ENCODE measurements at regions of chr18 and their contacts with region 1.

Region 1: DNA sequence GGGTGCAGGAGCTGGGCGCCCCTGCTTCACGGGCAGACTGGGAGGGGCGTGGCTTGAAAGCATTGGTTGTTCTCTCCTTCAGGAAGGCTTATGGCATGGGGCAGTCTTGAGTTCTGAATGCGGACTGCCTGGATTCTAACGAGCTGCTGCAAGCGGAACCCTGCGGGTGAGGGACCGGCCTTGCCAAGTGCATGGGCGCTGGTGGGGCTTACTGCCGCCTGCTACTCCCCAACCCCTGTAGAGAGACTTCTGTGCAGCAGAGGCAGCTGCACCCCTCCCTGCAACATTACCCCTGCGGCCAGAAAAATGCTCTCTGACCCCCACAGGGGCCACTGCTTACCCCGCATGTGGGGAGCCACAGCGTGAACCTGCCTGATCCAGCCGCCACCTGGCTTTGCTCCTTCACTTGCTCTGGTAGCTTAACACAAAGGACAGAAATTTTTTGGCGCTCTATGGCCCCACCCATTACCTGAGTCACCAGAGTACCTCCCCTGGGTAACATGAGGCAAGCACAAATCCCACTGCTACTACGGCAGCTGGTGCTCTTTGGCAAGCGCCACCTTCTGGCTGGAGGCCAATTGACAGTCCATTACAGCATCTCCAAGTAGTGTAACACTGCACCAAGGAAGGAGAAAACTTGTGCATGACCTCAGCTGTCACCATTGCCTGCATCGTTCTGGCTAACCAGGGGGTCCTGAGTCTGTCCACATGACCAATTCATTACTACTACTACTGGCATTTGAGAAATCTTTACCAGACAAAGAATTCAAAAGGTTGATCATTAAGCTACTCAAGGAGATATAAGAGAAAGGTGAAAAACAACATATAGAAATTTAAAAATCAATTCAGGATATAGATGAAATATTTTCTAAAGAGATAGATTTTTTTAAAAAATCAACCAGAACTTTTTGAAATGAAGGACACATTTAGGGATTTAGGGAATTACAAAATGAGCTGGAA is 35.4 kb downstream of the MYL12B start:
- DNase-seq: peak; percentile 88 to 96 (median 92)
- ATAC-seq: peak; percentile 96
- H3K4me3 ChIP-seq: peak overlapping the region; percentile 65
- H3K4me3 Mint-ChIP-seq: peak overlapping the region; percentile 91
- H3K27ac ChIP-seq: no peak overlapping the region
- H3K27ac Mint-ChIP-seq: peak overlapping the region; percentile 79
- H3K4me1 ChIP-seq: peaks cover 11% of the 10 kb centered on the region
- H3K4me1 Mint-ChIP-seq: peaks cover 11% of the 10 kb centered on the region
- H3K27me3 ChIP-seq: peaks cover 0 to 15% of the 10 kb centered on the region in 2 experiments
- H3K27me3 Mint-ChIP-seq: peaks cover 35% of the 10 kb centered on the region
- CTCF ChIP-seq: peak; percentile 80

Region 2: DNA sequence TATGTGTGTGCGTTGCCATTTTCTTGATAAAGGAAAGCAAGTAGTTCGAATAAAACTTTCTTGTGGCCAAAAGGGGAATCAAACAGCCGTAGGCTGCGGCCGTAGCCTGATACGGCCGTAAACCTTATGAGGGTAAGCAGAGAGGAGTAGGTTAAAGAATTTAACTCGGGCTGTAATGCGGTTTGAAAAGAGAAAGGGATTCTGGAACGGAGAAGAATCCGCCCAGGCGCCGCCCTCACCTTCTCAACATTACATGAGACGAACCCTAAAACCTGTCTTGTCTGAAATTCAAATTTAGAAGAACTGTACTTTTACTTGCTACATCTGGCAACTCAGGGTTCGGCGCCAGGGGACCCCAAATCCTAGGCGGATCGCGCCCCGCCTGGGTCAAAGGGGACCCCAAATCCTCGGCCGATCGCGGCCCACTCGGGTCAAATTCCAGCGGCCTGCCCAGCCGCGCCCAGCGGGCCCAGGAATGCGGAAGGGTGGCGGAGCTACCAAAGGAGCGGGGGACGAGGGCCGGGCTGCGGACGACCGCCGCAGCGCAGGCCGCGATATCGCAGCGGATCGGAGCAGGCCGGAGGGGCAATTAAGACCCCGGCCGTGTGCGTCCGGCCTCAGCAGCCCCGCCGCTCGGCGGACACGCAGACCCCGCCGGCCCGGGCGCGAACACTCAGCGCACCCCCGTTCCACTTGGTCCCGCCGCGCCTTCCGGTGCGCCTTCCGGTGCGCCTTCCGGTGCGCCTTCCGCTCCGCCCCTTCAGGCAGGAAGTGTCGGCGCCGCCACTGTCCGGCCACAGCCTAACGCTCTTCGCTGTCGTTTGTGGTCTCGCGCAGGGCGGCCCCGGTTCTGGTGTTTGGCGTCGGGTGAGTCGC is 35.7 kb before region 1 on chr18 and contains the start of gene MYL12B:
- CTCF ChIA-PET with region 1: interaction called, 4 read pairs
- POLR2A ChIA-PET with region 1: interaction called, 17 read pairs
- intact Hi-C with region 1: no loop called
- DNase-seq: peak; percentile 63 to 92 (median 75)
- ATAC-seq: peak; percentile 71
- H3K4me3 ChIP-seq: peak within 1 kb of the TSS; percentile 68
- H3K4me3 Mint-ChIP-seq: peak within 1 kb of the TSS; percentile 100
- H3K27ac ChIP-seq: peak within 1 kb of the TSS; percentile 95 to 98
- H3K27ac Mint-ChIP-seq: peak within 1 kb of the TSS; percentile 100
- H3K4me1 ChIP-seq: peaks cover 43% of the 10 kb centered on the region
- H3K4me1 Mint-ChIP-seq: peaks cover 85% of the 10 kb centered on the region
- H3K27me3 ChIP-seq: no peaks in the 10 kb centered on the region
- H3K27me3 Mint-ChIP-seq: no peaks in the 10 kb centered on the region
- CTCF ChIP-seq: no peak
- total RNA-seq, gene MYL12B: 128 to 133 TPM

Region 3: DNA sequence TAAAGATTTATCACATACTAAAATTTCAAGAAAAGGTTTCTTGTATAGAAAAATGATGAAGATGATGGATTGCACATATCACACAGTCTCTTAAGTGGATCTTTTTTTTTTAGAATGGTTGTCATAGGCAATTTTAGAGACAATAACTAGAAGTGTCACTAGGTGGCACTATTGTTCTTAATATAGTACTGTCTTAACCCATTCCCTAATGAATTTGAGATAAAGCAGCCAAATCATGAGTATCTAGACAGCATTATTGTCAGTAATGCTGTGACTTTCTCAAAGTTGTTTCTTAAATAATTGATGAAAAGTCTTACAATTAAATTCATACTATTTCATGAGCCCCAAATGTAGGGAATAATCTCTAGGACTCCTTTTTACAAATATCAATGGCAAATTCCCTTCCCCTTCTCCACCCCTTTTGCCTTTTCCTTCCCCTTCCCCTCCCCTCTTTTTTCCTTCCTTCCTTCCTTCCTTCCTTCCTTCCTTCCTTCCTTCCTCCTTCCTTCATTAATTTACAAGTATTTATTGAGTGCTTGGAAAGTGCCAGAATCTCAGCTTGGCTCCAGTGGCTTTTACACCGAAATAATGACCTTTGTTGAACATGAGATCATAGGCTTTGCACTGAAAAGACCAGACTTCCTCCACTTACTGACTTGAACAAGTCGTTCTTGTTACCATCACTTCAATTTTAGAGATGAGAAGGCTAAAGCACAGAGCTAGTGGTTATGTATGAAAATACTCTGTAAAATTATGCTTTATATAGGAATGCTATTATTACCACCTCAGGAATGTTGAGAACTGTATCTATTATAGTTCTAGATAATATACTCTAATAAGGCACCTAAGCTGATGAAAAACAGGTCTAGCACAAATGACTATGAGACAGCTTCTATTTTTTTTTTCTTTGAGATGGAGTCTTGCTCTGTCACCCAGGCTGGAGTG is 15.6 kb before region 1 on chr18:
- CTCF ChIA-PET with region 1: interaction called, 9 read pairs
- POLR2A ChIA-PET with region 1: interaction called, 3 read pairs
- intact Hi-C with region 1: loop called in 1 of 2 experiments (anchors 2 kb)
- DNase-seq: peak in 3 of 14 experiments; percentile 79 to 83 (median 83)
- ATAC-seq: peak; percentile 87
- H3K4me3 ChIP-seq: no peak overlapping the region
- H3K4me3 Mint-ChIP-seq: no peak overlapping the region
- H3K27ac ChIP-seq: no peak overlapping the region
- H3K27ac Mint-ChIP-seq: no peak overlapping the region
- H3K4me1 ChIP-seq: no peaks in the 10 kb centered on the region
- H3K4me1 Mint-ChIP-seq: no peaks in the 10 kb centered on the region
- H3K27me3 ChIP-seq: no peaks in the 10 kb centered on the region
- H3K27me3 Mint-ChIP-seq: no peaks in the 10 kb centered on the region
- CTCF ChIP-seq: peak; percentile 82

Region 4: GRCh38 chr18:3350566-3351527 is 53.5 kb after region 1 on chr18:
- CTCF ChIA-PET with region 1: no interaction called
- POLR2A ChIA-PET with region 1: no interaction called
- intact Hi-C with region 1: no loop called
- DNase-seq: no peak
- ATAC-seq: no peak
- H3K4me3 ChIP-seq: no peak overlapping the region
- H3K4me3 Mint-ChIP-seq: no peak overlapping the region
- H3K27ac ChIP-seq: no peak overlapping the region
- H3K27ac Mint-ChIP-seq: no peak overlapping the region
- H3K4me1 ChIP-seq: no peaks in the 10 kb centered on the region
- H3K4me1 Mint-ChIP-seq: peaks cover 3% of the 10 kb centered on the region
- H3K27me3 ChIP-seq: no peaks in the 10 kb centered on the region
- H3K27me3 Mint-ChIP-seq: peaks cover 18% of the 10 kb centered on the region
- CTCF ChIP-seq: no peak

Region 5: GRCh38 chr18:3411854-3412268 is 114.6 kb after region 1 on chr18:
- CTCF ChIA-PET with region 1: no interaction called
- POLR2A ChIA-PET with region 1: no interaction called
- intact Hi-C with region 1: no loop called
- DNase-seq: peak in 10 of 14 experiments; percentile 2 to 57 (median 40)
- ATAC-seq: no peak
- H3K4me3 ChIP-seq: peak overlapping the region; percentile 24
- H3K4me3 Mint-ChIP-seq: no peak overlapping the region
- H3K27ac ChIP-seq: no peak overlapping the region
- H3K27ac Mint-ChIP-seq: no peak overlapping the region
- H3K4me1 ChIP-seq: peaks cover 12% of the 10 kb centered on the region
- H3K4me1 Mint-ChIP-seq: peaks cover 13% of the 10 kb centered on the region
- H3K27me3 ChIP-seq: no peaks in the 10 kb centered on the region
- H3K27me3 Mint-ChIP-seq: no peaks in the 10 kb centered on the region
- CTCF ChIP-seq: no peak

Region 6: DNA sequence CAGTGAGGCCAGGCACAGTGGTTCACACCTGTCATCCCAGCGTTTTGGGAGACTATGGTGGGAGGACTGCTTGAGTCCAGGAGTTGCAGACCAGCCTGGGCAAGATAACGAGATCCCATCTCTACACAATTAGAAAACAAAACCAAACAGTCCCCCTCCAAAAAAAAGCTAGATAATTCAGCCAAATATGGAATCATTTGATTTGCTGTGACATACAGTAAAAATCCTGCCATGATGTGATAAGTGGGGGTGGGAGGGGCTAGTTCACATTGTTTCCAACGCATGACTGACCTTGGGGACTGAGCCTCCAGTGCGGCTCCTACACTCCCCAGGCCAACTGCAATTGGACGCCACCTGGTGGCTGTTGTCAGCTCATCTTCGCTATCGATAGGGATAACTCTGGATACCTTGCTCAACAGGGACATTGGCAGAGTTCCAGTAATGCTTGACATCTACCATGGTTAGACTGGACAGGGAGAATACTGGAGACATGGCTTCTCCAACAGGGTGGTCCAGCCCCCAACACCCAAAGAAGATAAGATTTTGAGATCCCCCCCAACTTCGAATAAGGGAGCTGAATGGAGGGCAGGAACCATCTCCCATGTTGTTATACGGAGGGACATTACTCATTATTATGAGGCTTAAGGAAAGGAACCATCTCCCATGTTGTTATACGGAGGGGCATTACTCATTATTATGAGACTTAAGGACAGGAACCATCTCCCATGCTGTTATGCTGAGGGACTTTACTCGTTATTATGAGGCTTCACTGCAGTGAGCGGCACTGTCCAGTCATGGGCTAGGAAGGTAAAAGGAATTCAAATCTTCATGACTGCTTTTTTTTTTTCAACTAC is 288.6 kb after region 1 on chr18:
- CTCF ChIA-PET with region 1: interaction called, 11 read pairs
- POLR2A ChIA-PET with region 1: interaction called, 3 read pairs
- intact Hi-C with region 1: no loop called
- DNase-seq: peak; percentile 48 to 85 (median 60)
- ATAC-seq: peak; percentile 86
- H3K4me3 ChIP-seq: no peak overlapping the region
- H3K4me3 Mint-ChIP-seq: no peak overlapping the region
- H3K27ac ChIP-seq: no peak overlapping the region
- H3K27ac Mint-ChIP-seq: no peak overlapping the region
- H3K4me1 ChIP-seq: peaks cover 11% of the 10 kb centered on the region
- H3K4me1 Mint-ChIP-seq: peaks cover 12% of the 10 kb centered on the region
- H3K27me3 ChIP-seq: no peaks in the 10 kb centered on the region
- H3K27me3 Mint-ChIP-seq: no peaks in the 10 kb centered on the region
- CTCF ChIP-seq: peak; percentile 77

Region 7: DNA sequence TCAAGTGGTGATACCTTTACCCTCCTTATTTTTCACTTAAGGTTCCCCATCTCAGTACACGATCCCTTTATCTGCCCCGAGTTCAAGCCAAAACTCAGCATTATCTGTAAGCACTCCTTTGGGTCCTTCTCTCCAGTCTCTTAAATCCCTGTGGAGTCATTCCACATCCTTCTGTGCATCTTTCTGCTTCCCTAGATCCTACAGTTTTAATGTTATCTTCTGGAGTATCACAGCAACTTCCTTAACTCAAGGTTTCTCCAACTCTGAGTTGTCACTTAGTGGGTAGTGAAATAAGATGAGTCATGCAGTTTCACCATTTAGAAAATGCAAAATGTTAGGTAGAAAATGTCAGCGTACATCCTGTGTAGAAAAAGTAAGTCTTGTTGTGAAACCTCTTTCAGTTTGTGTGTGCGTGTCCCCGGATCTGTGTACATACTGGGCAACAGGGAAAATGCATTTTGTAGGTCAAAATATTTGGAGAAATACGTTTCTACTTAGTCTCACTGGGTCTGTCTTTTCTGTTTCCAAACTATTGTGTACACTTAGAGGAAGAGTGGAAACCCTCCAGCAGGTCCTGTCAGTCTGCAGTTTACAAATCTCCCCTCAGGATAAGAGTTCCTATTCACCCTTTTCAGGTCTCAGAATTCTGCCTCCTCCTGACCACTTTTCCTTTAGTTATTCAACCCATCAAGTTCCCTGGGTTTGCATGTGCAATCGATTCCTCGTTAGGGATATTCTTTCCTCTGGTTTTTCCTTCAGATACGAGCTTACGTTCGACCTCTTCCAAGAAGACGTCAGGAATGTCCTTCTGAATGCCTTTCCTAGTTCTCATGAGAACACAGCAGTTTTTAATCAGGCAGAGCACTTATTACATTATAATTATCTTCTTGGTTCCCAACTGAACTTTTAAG is 307.4 kb after region 1 on chr18:
- CTCF ChIA-PET with region 1: interaction called, 9 read pairs
- POLR2A ChIA-PET with region 1: interaction called, 12 read pairs
- intact Hi-C with region 1: no loop called
- DNase-seq: peak in 5 of 14 experiments; percentile 9 to 85 (median 72)
- ATAC-seq: peak; percentile 69
- H3K4me3 ChIP-seq: peak overlapping the region; percentile 47
- H3K4me3 Mint-ChIP-seq: no peak overlapping the region
- H3K27ac ChIP-seq: peak overlapping the region; percentile 38 to 58
- H3K27ac Mint-ChIP-seq: no peak overlapping the region
- H3K4me1 ChIP-seq: peaks cover 47% of the 10 kb centered on the region
- H3K4me1 Mint-ChIP-seq: peaks cover 8% of the 10 kb centered on the region
- H3K27me3 ChIP-seq: no peaks in the 10 kb centered on the region
- H3K27me3 Mint-ChIP-seq: no peaks in the 10 kb centered on the region
- CTCF ChIP-seq: no peak

Measured in CD4-positive, alpha-beta T cell (primary cell).